AG04449 (cell line): ENCODE measurements at regions of chr3 and their contacts with region 1.

Region 1: DNA sequence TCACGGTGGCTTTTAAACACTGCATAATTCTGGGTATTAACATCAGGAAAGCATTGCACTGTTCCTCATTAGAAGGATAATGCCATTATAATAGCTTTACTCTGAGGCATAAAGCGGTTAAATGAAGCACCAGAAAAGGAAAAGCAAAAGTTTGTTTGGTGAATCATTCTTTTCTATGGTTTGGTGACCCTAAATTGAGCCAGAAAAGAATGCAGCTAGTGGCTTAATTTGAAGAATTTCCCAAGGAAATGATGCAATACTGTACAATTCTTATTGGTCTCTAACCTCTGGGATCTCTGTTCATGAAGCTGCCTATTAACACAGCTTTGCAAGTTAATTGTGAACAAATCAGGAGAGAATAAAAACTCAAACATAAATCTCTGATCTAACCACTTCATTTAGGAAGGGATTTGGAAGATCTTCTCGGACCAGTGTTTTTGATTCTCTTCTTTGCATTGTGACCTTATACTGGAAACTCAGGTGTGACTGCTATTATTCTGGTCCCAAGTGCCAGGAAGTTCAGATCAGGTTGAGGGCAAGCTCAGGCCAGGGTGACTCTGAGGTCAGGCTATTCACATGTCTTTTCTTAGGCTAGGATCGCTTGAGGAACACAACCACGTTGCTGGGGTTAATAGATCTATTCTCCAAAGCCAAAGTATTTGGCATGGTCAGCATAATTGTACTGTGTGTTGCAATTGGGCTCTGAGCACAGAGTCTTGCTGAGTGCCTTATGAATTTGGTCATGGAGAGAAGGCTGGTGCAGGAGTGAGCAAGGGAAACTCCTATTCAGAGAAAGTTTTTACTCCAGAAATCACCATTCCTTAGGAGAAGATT is 11.3 kb upstream of the DLG1 start:
- DNase-seq: peak; percentile 89
- H3K4me3 ChIP-seq: no peak overlapping the region
- CTCF ChIP-seq: no peak

Region 2: DNA sequence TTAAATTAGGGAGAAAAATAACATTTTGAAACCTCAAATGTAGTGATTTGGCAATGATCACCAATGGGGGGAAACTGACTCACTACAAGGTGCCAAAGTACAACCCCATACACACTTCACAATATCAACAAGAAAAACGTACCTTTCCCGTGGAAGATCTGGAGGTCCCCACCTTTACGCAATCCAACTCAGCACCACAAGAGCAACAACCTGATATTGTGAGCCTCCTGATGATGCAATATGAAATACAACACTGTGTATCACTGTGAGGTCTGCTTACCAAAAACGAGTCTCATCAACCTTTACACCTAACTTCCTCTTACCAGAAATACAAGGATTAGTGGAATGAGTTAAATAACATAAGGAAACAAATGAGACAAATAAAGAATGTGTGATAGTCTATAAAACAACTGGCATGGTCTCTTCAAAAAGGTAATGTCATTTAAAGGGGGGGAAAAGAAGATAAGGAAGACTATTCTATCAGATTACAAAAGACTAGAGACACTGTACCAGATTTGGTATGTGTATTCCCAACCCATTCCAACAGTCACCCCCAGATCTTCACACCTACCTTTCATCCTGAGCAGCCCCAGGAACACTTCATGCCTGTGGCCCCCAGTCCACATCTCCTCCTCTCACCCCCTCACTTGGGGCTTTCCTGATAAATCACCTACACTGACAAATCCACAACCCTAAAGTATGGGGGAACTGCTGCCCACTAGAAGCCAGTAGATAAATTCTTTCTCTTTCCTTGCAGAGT is 39.0 kb before region 1 on chr3:
- CTCF ChIA-PET with region 1: no interaction called
- POLR2A ChIA-PET with region 1: no interaction called
- DNase-seq: no peak
- H3K4me3 ChIP-seq: no peak overlapping the region
- CTCF ChIP-seq: no peak

Region 3: GRCh38 chr3:197394464-197395321 is 84.9 kb after region 1 on chr3:
- CTCF ChIA-PET with region 1: no interaction called
- POLR2A ChIA-PET with region 1: interaction called, 15 read pairs
- DNase-seq: peak; percentile 100
- H3K4me3 ChIP-seq: no peak overlapping the region
- CTCF ChIP-seq: no peak

Region 4: GRCh38 chr3:197577366-197578074 is 267.8 kb after region 1 on chr3:
- CTCF ChIA-PET with region 1: no interaction called
- POLR2A ChIA-PET with region 1: no interaction called
- DNase-seq: no peak
- H3K4me3 ChIP-seq: no peak overlapping the region
- CTCF ChIP-seq: no peak